ENCODE measurements at regions of chr1 and their contacts with region 1.

Region 1: DNA sequence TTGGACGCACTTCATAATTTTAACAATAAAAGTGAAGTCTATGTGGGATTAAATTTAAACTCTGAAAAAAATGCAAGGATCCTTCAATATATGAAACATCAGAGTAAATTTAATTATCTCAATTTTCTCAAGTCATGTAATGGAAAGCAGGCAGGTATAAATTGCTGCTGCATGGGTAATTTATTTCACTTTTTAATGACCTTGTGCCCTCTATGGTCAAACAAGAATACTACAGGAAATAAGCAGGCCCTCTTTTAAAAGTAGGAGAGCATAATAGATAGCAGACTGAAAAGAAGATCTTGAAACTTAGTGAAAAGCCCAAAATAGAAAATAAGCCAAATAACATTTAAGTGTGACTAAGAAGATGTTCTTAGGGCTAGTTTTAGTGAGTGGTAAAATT is 22.9 kb downstream of the BCAS2 start:
- DNase-seq: peak; percentile 43
- CTCF ChIP-seq: peak; percentile 34

Region 2: DNA sequence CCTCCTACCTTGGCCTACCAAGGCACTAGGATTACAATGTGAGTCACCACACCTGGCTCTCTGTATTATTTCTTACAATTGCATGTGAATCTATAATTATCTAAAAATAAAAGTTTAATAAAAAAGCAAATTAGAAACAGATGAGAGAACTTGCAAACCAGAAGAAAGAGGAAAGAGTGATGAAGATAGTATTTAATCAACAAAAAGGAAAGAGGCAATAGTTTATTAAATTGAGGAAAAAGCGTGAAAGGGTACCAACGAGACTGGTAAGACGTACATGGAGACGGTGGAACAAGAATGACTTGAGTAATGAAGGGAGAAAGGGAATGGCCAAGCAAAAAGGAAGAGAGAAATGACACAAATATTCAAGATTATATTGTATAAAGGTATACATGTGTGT is 10.5 kb after region 1 on chr1:
- CTCF ChIA-PET with region 1: interaction called, 11 read pairs
- POLR2A ChIA-PET with region 1: no interaction called
- DNase-seq: no peak
- CTCF ChIP-seq: no peak

Region 3: DNA sequence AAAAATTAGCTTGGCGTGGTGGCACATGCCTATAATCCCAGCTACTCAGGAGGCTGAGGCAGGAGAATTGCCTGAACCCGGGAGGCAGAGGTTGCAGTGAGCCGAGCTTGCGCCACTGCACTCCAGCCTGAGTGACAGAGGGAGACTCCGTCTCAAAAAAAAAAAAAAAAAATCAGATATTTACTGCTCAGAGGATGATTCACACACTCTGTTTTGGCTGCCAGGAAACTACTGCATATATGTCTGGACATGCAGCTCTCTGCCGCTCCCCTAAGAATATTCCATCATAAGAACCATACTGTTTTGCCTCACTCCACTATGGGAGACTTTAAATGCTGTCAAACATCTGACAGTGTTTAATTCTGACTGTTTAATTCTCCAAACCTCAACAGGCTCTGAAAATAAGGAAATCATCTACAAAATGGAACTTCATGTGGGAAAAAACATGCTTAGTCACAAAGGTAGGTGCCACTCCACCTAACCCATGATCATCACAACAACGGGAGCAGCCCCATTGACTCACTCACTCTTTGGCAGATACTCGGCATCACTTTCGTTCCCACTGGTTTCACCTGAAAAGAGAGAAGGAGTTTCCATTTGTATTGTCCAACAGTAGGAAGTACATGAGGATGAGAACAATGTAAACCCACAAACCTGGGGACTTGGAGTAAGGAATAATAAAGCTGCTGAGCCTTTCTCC is 52.2 kb after region 1 on chr1:
- CTCF ChIA-PET with region 1: no interaction called
- POLR2A ChIA-PET with region 1: no interaction called
- DNase-seq: no peak
- CTCF ChIP-seq: no peak

Region 4: GRCh38 chr1:114903480-114903879 is 344.9 kb after region 1 on chr1:
- CTCF ChIA-PET with region 1: no interaction called
- POLR2A ChIA-PET with region 1: no interaction called
- DNase-seq: no peak
- CTCF ChIP-seq: no peak

Measured in GM10248 (cell line).